Left cardiac atrium (tissue), 4 donors: ENCODE measurements at regions of chr1 and their contacts with region 1.

Region 1: DNA sequence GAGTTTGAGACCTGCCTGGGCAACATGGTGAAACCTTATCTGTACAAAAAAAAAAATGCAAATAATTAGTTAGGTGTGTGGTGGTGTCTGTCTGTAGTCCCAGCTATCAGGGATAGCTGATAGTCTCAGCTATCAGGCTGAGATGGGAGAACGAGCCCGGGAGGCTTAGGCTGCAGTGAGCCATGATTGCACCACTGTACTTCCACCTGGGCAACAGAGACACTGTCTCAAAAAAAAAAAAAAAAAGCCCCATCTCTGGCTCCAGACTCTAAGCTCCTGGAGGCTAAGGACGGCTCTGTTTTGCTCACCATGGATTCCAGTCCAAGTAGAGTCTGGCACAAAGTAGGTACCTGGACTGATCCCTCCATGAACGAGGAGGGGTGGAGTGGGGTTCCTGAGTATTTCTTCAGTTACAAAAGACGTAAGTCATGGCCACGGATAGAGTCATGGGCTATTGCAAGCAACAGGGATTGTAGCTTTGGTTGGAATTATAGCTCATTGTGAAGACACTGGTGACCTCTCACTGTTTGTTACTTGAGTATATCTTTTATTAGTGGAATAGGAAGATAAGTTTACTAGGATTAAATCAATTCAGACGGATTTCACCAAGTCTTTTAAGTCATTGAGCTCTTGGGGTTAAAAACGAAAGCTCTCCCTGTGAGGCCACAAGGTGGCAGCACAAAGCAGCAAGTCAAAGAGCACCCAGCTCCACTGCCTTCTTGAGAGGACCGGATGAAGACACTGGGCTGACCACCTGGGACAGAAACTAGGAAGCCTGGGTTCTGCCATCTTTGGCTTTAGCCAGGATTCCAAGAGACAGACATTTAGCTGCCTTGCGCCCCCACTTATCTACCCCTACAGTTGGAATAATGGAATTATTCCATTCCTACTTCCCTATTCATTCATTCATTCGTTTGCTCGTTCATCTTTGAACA is 35.6 kb upstream of the TMEM61 start:
- DNase-seq: peak; percentile 81
- ATAC-seq: peak; percentile 71

Region 2: GRCh38 chr1:54886724-54887664 is 57.9 kb before region 1 on chr1 and contains the start of gene DHCR24:
- intact Hi-C with region 1: loop called in 1 of 2 experiments (anchors 10 kb)
- DNase-seq: peak; percentile 88
- ATAC-seq: peak; percentile 97 to 98
- total RNA-seq, gene DHCR24: 54.7 to 55.4 TPM

Region 3: GRCh38 chr1:54904476-54905048 is 40.3 kb before region 1 on chr1:
- intact Hi-C with region 1: no loop called
- DNase-seq: no peak
- ATAC-seq: no peak

Region 4: GRCh38 chr1:54989968-54990810 is 45.3 kb after region 1 on chr1:
- intact Hi-C with region 1: loop called in 1 of 2 experiments (anchors 5 kb)
- DNase-seq: no peak
- ATAC-seq: peak in 1 of 2 donors; percentile 66